CD4-positive, alpha-beta memory T cell (primary cell): ENCODE measurements at regions of chr11 and their contacts with region 1.

Region 1: GRCh38 chr11:68825571-68825970 is 16.1 kb downstream of the CPT1A start:
- DNase-seq: peak; percentile 30 to 59 (median 40)
- H3K4me3 ChIP-seq: no peak overlapping the region
- H3K4me3 Mint-ChIP-seq: peak overlapping the region in 2 of 8 donors; percentile 20 to 36
- H3K27ac ChIP-seq: no peak overlapping the region
- H3K27ac Mint-ChIP-seq: peak overlapping the region in 1 of 7 donors; percentile 17
- H3K4me1 ChIP-seq: peaks cover 16% of the 10 kb centered on the region
- H3K4me1 Mint-ChIP-seq: peaks cover 21 to 47% (median 32%) of the 10 kb centered on the region in 4 donors
- H3K27me3 ChIP-seq: no peaks in the 10 kb centered on the region
- H3K27me3 Mint-ChIP-seq: no peaks in the 10 kb centered on the region

Region 2: GRCh38 chr11:68780829-68781228 is 44.7 kb before region 1 on chr11:
- CTCF ChIA-PET with region 1: no interaction called
- POLR2A ChIA-PET with region 1: no interaction called
- intact Hi-C with region 1: no loop called
- DNase-seq: no peak
- H3K4me3 ChIP-seq: no peak overlapping the region
- H3K4me3 Mint-ChIP-seq: no peak overlapping the region
- H3K27ac ChIP-seq: no peak overlapping the region
- H3K27ac Mint-ChIP-seq: no peak overlapping the region
- H3K4me1 ChIP-seq: no peaks in the 10 kb centered on the region
- H3K4me1 Mint-ChIP-seq: peaks cover 0 to 2% (median 0%) of the 10 kb centered on the region in 4 donors
- H3K27me3 ChIP-seq: no peaks in the 10 kb centered on the region
- H3K27me3 Mint-ChIP-seq: no peaks in the 10 kb centered on the region

Region 3: DNA sequence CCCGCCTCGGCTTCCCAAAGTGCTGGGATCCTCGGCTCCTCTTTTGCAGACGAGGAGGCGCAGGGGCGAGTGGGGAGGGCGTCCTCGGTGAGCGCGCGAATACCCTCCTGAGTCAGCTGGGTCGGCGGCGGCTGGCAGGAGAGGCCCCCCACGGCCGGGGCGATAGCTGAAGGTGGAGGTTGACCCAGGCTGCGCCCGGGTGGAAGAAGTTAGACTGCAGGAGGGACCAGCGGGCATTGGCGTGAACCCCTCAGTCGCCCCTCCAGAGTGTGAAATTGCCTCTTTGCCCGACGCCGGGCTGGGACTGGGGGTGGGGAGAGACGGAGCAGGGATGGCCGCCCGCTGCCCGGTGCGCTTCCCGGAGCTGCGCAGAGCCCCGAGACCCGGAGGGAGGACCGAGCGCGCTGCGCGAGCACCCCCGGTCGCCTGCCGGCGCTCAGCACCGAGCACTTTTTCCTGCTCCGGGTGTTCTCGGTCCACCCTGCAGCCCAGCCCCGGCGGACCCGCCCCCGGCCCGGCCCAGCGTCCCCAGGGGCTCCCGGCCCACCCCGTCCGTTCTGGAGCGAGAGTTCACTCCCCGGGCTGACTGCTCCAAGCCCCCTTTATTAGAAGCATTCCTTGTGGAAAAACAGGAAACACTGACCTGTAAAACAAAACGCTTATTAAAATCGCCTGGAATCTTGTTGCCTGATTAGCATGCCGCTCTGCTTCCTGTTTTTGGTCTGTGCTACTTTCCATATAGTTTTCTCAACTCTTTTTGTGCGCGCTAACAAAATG is 29.8 kb after region 1 on chr11:
- CTCF ChIA-PET with region 1: interaction called, 12 read pairs
- POLR2A ChIA-PET with region 1: no interaction called
- intact Hi-C with region 1: no loop called
- DNase-seq: peak in 1 of 5 donors; percentile 23
- H3K4me3 ChIP-seq: peak overlapping the region in 1 of 2 donors; percentile 38
- H3K4me3 Mint-ChIP-seq: peak overlapping the region; percentile 59 to 79 (median 74)
- H3K27ac ChIP-seq: no peak overlapping the region
- H3K27ac Mint-ChIP-seq: no peak overlapping the region
- H3K4me1 ChIP-seq: peaks cover 11% of the 10 kb centered on the region
- H3K4me1 Mint-ChIP-seq: peaks cover 0 to 11% (median 2%) of the 10 kb centered on the region in 4 donors
- H3K27me3 ChIP-seq: peaks cover 13% of the 10 kb centered on the region
- H3K27me3 Mint-ChIP-seq: peaks cover 18 to 21% of the 10 kb centered on the region in 2 donors